ENCODE measurements at regions of chr3 and their contacts with region 1.

Region 1: GRCh38 chr3:153970741-153971347 is 150.3 kb upstream of the ARHGEF26 start:
- DNase-seq: no peak
- H3K4me3 ChIP-seq: no peak overlapping the region
- H3K4me3 Mint-ChIP-seq: no peak overlapping the region
- H3K27ac Mint-ChIP-seq: no peak overlapping the region
- H3K4me1 ChIP-seq: no peaks in the 10 kb centered on the region
- H3K4me1 Mint-ChIP-seq: no peaks in the 10 kb centered on the region
- H3K27me3 ChIP-seq: no peaks in the 10 kb centered on the region
- H3K27me3 Mint-ChIP-seq: peaks cover 4% of the 10 kb centered on the region
- CTCF ChIP-seq: peak in 1 of 2 experiments; percentile 38

Region 2: GRCh38 chr3:153855772-153856171 is 115.1 kb before region 1 on chr3:
- CTCF ChIA-PET with region 1: no interaction called
- POLR2A ChIA-PET with region 1: no interaction called
- intact Hi-C with region 1: loop called (anchors 5 kb)
- DNase-seq: peak in 1 of 2 experiments; percentile 11
- H3K4me3 ChIP-seq: no peak overlapping the region
- H3K4me3 Mint-ChIP-seq: no peak overlapping the region
- H3K27ac Mint-ChIP-seq: no peak overlapping the region
- H3K4me1 ChIP-seq: no peaks in the 10 kb centered on the region; the same call in 1 of the 2 replicates
- H3K4me1 Mint-ChIP-seq: no peaks in the 10 kb centered on the region
- H3K27me3 ChIP-seq: no peaks in the 10 kb centered on the region
- H3K27me3 Mint-ChIP-seq: no peaks in the 10 kb centered on the region
- CTCF ChIP-seq: peak in 1 of 2 experiments; percentile 13

Region 3: GRCh38 chr3:154013736-154014135 is 42.9 kb after region 1 on chr3:
- CTCF ChIA-PET with region 1: no interaction called
- POLR2A ChIA-PET with region 1: no interaction called
- intact Hi-C with region 1: no loop called
- DNase-seq: no peak
- H3K4me3 ChIP-seq: no peak overlapping the region
- H3K4me3 Mint-ChIP-seq: no peak overlapping the region
- H3K27ac Mint-ChIP-seq: no peak overlapping the region
- H3K4me1 ChIP-seq: no peaks in the 10 kb centered on the region
- H3K4me1 Mint-ChIP-seq: no peaks in the 10 kb centered on the region
- H3K27me3 ChIP-seq: no peaks in the 10 kb centered on the region
- H3K27me3 Mint-ChIP-seq: no peaks in the 10 kb centered on the region
- CTCF ChIP-seq: no peak

Measured in Caco-2 (cell line).